ENCODE measurements at regions of chr3 and their contacts with region 1.

Region 1: DNA sequence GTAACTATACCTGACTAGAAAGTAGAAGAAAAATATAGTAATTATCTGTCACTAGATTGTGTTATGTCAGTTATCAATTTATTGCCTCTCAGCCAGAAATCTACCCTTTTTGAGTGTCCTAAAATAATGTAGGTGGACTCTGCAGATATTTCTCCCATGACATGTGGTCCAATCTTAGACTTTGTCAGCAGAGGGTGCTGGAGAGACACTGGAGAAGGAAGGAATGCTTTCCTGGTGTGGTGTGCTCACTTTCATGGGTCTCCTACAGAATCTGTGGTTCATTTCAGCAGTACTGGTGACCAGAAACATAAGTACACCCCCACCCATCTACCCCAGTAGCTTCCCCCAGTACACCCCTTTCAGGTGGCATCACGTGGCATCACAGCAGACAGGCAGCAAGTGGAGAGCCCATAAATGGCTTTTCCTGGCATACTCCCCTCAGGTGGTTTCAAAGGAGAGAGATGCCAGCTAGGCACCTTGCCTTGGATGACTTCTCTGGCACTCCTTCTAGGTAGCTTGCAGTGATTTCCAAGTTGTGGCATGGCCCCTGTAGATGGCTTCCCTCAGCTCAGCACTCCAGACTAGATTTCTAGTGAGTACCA is 114.7 kb downstream of the GADL1 start:
- DNase-seq: peak; percentile 20
- H3K4me3 Mint-ChIP-seq: no peak overlapping the region
- H3K27ac Mint-ChIP-seq: no peak overlapping the region
- H3K4me1 Mint-ChIP-seq: no peaks in the 10 kb centered on the region
- H3K27me3 Mint-ChIP-seq: peaks cover 3% of the 10 kb centered on the region

Region 2: DNA sequence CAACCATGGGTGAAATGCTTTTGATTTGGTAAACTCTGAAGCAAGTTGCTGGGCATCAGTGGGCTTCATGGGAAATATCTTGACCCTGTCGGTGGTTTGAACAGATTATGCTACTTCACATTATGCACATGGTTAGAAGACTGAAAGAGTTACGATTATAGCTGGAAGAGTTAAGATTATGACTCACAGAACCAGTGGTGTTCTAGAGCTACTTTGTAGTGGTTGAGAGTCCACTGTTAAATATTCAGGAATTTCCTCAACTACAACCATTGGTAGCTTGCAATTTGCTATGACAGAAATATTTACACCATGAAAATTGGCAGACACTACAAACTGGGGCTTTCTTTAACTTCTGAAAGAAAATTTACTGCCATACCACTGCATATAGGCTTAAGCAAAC is 15.4 kb after region 1 on chr3:
- CTCF ChIA-PET with region 1: no interaction called
- intact Hi-C with region 1: no loop called
- DNase-seq: no peak
- H3K4me3 Mint-ChIP-seq: no peak overlapping the region
- H3K27ac Mint-ChIP-seq: no peak overlapping the region
- H3K4me1 Mint-ChIP-seq: no peaks in the 10 kb centered on the region
- H3K27me3 Mint-ChIP-seq: no peaks in the 10 kb centered on the region

Region 3: GRCh38 chr3:31356941-31357340 is 577.2 kb after region 1 on chr3:
- CTCF ChIA-PET with region 1: no interaction called
- intact Hi-C with region 1: loop called (anchors 10 kb)
- DNase-seq: peak; percentile 12
- H3K4me3 Mint-ChIP-seq: no peak overlapping the region
- H3K27ac Mint-ChIP-seq: peak overlapping the region; percentile 3
- H3K4me1 Mint-ChIP-seq: peaks cover 18% of the 10 kb centered on the region
- H3K27me3 Mint-ChIP-seq: no peaks in the 10 kb centered on the region

Region 4: DNA sequence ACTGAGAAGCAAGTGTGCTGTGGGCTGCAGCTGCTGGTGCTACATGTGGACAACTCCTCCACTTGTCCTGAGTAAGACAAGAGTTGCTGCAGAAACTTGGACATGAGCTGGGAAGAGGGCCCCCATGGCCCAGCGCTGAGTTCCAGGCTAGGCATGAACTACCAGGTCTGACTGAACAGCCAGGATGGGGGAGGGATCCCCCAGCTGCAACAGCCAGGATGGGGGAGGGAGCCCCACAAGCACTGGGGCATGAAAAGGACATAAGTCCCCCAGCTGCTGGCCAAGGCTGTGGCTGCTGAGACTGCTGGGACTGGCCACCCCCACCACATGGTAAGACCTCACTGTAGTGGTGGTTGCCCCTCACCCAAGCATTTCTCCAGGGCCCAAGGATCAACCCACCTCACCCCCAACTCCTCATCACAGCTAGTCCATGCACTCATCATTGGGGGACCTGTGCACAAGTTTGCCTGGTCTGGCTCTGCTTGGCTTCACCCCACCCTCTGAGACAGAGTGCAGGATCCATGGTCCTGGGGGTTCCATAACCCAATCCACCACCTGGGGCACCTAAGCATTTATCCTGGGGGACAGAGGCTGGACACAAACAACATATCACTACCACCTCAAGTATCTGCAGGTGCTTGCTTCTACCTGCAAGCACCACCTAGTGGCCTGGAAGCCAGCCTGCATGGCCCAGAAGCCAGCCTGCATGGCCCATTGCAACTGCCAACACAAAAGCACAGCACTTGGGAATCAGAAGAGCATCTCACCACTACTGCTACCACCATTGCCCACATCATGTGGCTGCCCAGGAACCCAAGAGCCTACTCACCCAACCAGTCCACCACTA is 668.5 kb after region 1 on chr3:
- CTCF ChIA-PET with region 1: no interaction called
- intact Hi-C with region 1: loop called (anchors 10 kb)
- DNase-seq: peak; percentile 50
- H3K4me3 Mint-ChIP-seq: no peak overlapping the region
- H3K27ac Mint-ChIP-seq: no peak overlapping the region
- H3K4me1 Mint-ChIP-seq: peaks cover 17% of the 10 kb centered on the region
- H3K27me3 Mint-ChIP-seq: no peaks in the 10 kb centered on the region

Measured in activated naive CD4-positive, alpha-beta T cell treated with anti-CD3 and anti-CD28 coated beads for 36 hours (primary cell).